ENCODE measurements at regions of chr20 and their contacts with region 1.

Region 1: DNA sequence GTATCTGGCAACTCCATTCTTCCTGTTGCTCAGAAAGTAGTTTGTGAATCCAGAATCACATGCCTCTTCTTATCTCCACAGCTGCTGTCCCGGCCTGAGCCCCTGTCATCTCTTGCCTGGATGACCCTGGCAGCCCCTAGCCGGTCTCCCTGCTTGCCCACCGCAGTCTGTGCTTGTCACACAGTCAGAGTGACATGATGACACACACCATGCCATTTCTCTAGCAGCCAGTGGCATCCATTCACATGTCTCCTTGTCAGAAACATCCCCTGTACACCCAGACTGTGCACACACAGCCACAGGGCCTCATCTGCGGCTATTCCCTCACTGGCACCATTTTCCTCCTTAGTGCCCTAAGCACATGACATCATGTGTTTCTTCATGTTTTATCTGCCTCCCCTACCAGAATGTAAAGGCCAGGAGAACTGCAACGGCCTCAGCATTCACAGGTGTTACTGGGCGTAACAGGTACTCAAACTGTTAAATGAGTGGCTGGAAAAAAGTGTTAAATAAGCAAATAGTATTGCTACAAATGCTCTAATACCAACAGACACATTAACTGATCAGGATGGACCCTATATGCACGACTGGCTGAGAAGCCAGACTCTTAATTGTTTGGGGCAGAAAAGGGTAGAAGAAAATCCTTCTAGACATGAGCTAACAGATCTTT is 9.6 kb downstream of the ABHD12 start:
- DNase-seq: no peak
- ATAC-seq: peak in 2 of 4 donors; percentile 17 to 21
- H3K4me3 ChIP-seq: no peak overlapping the region
- H3K27ac ChIP-seq: no peak overlapping the region
- H3K4me1 ChIP-seq: peaks cover 0 to 50% (median 14%) of the 10 kb centered on the region in 12 donors
- H3K27me3 ChIP-seq: no peaks in the 10 kb centered on the region
- CTCF ChIP-seq: no peak
- POLR2A ChIP-seq: no peak

Region 2: DNA sequence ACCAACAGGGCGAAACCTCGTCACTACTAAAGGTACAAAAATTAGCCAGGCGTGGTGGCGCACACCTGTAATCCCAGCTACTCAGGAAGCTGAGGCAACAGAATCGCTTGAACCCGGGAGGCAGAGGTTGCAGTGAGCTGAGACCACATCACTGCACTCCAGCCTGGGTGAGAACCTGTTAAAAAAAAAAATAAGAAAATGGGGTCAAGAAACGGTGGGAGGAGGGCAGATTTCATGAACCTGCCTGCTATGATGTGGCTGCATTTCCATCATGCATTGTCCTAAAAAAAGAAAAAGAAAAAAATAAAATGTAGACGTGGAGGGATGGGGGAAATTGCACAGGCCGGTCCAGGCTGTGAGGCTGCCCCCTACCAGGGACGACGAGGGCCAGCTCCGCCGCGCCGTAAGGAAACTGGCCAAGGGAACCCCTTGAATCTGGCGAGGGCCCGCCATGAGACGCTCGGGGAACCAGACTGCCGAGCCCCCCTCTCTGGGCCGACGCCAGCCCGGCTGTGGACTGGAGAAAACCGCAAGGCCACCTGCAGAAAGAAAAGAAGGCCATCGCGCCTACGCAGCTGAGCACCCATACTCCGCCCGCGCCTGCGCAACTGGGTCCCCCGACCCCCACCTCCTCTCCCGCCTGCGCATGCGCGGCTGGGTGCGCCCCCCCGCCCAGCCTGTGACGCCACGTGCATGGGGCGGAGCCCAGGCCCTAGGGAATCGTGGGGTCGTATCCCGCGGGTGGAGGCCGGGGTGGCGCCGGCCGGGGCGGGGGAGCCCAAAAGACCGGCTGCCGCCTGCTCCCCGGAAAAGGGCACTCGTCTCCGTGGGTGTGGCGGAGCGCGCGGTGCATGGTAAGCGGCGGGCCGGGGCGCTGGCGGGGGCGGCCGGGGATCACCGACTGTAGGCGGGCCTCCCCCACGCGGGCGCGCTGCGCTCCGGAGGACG is 185.8 kb before region 1 on chr20 and contains the start of gene ENTPD6:
- intact Hi-C with region 1: no loop called
- DNase-seq: peak; percentile 94 to 97 (median 94)
- ATAC-seq: peak; percentile 71 to 88 (median 88)
- H3K4me3 ChIP-seq: peak within 1 kb of the TSS; percentile 63 to 99 (median 90)
- H3K27ac ChIP-seq: peak within 1 kb of the TSS; percentile 79 to 98 (median 93)
- H3K4me1 ChIP-seq: peaks cover 0 to 70% (median 42%) of the 10 kb centered on the region in 12 donors
- H3K27me3 ChIP-seq: no peaks in the 10 kb centered on the region
- CTCF ChIP-seq: peak in 6 of 12 donors; percentile 15 to 52 (median 40)
- POLR2A ChIP-seq: peak; percentile 52 to 85
- total RNA-seq, gene ENTPD6: 58.7 to 139 (median 86.7) TPM

Region 3: GRCh38 chr20:25360635-25361286 is 20.3 kb before region 1 on chr20:
- intact Hi-C with region 1: loop called in 1 of 10 experiments (anchors 2 kb)
- DNase-seq: no peak
- ATAC-seq: peak in 2 of 4 donors; percentile 45 to 59
- H3K4me3 ChIP-seq: no peak overlapping the region
- H3K27ac ChIP-seq: peak overlapping the region in 1 of 12 donors; percentile 73
- H3K4me1 ChIP-seq: peaks cover 0 to 22% (median 7%) of the 10 kb centered on the region in 12 donors
- H3K27me3 ChIP-seq: no peaks in the 10 kb centered on the region
- CTCF ChIP-seq: no peak
- POLR2A ChIP-seq: no peak

Region 4: DNA sequence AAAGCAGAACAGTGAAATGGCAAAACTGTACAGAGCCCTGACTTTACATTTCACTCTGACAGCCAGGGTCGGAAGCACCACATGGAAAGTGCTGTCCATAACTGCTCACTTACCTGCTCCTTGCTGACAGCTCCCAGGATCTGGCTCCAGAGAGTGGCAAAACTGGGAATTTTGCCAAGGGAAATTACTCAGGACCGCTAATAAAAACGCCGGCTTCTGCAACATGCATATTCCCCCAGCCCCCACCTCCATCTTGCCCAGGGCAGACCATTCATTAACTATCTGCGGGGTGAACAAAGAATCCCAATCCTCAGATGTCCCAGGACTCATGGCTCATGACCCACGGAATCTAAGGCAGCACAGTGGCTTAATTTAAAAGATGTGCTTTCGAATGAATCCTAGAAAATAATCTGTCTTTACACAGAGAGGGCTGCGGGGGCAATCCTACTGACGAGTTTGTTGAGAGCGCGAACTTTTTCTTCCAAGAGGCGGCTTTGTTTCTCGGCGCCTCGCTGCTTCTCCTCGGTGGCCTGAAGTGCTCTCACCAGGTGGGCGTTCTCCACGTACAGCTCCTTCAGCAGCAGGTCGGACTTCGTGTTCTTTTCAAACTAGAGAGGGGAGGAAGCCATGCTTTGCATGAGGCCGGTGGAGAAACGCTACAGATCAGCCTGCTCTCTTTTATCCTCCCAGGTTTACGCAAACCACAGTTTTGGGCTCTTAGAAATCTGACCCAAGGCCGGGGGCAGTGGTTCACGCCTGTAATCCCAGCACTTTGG is 72.1 kb after region 1 on chr20:
- intact Hi-C with region 1: no loop called
- DNase-seq: no peak
- ATAC-seq: peak; percentile 32 to 55 (median 41)
- H3K4me3 ChIP-seq: no peak overlapping the region
- H3K27ac ChIP-seq: no peak overlapping the region
- H3K4me1 ChIP-seq: peaks cover 0 to 7% (median 0%) of the 10 kb centered on the region in 12 donors
- H3K27me3 ChIP-seq: no peaks in the 10 kb centered on the region
- CTCF ChIP-seq: no peak
- POLR2A ChIP-seq: no peak

Measured in heart left ventricle (tissue), 16 donors.